CD8-positive, alpha-beta T cell (primary cell): ENCODE measurements at regions of chr7 and their contacts with region 1.

Region 1: GRCh38 chr7:78039790-78040776 is 241.5 kb downstream of the PHTF2 start:
- DNase-seq: peak; percentile 4 to 72 (median 28)
- ATAC-seq: peak; percentile 58
- H3K4me3 ChIP-seq: no peak overlapping the region
- H3K4me3 Mint-ChIP-seq: no peak overlapping the region
- H3K27ac ChIP-seq: no peak overlapping the region
- H3K27ac Mint-ChIP-seq: no peak overlapping the region
- H3K4me1 ChIP-seq: peaks cover 3% of the 10 kb centered on the region
- H3K4me1 Mint-ChIP-seq: peaks cover 2% of the 10 kb centered on the region
- H3K27me3 ChIP-seq: no peaks in the 10 kb centered on the region
- H3K27me3 Mint-ChIP-seq: peaks cover 27% of the 10 kb centered on the region
- CTCF ChIP-seq: peak; percentile 79

Region 2: DNA sequence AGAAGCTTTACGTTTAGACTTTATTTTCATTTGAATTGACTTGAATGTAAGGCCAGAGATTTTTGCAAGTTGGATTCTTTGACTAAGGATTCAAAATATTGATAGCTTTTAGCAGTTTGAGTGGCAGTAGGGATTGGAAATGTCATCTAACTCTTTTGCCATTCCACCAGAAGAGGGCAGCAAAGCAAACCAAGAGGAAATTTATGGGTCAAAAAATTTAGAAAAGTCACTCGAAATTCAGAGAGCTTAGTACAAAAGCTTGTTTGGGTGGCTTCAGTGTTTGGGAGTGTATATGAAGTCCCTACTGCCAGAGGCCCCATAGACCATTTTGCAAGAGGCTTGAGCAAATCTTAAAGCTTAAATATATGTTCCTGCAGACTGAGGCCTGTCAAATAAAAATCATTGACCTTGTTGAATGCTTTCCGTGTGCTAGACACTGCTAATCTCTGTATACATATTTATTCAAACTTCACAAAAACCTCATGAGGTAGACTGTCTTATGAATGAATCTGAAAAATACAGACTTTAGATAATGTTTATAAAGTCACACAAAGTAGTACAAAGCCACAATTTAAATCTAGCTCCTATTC is 388.4 kb before region 1 on chr7:
- CTCF ChIA-PET with region 1: interaction called, 10 read pairs
- POLR2A ChIA-PET with region 1: no interaction called
- intact Hi-C with region 1: loop called (anchors 2 kb)
- DNase-seq: peak in 5 of 9 experiments; percentile 13 to 62 (median 37)
- ATAC-seq: peak; percentile 44
- H3K4me3 ChIP-seq: no peak overlapping the region
- H3K4me3 Mint-ChIP-seq: no peak overlapping the region
- H3K27ac ChIP-seq: no peak overlapping the region
- H3K27ac Mint-ChIP-seq: no peak overlapping the region
- H3K4me1 ChIP-seq: no peaks in the 10 kb centered on the region
- H3K4me1 Mint-ChIP-seq: no peaks in the 10 kb centered on the region
- H3K27me3 ChIP-seq: no peaks in the 10 kb centered on the region
- H3K27me3 Mint-ChIP-seq: no peaks in the 10 kb centered on the region
- CTCF ChIP-seq: peak; percentile 78

Region 3: DNA sequence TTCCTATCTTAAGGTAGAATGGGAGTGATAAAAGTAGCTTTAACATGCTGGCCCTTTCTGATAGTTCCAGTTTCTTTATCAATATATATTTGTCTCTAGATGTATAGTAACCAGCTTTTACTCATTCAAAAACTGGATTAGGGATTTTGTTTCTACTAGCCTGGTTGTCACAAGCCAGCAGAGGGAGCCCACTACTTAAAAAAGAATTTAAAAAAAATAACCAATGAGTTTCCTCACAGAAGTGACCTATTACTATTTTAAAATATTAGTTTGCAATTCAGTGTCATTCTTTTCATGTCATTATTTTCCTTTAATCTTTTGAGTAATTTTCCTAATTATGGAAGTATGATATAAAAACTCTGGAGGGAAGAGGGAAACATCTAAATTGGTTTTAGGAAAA is 99.4 kb before region 1 on chr7:
- CTCF ChIA-PET with region 1: no interaction called
- POLR2A ChIA-PET with region 1: no interaction called
- intact Hi-C with region 1: loop called (anchors 2 kb)
- DNase-seq: peak in 2 of 9 experiments; percentile 6 to 8
- ATAC-seq: no peak
- H3K4me3 ChIP-seq: no peak overlapping the region
- H3K4me3 Mint-ChIP-seq: no peak overlapping the region
- H3K27ac ChIP-seq: no peak overlapping the region
- H3K27ac Mint-ChIP-seq: no peak overlapping the region
- H3K4me1 ChIP-seq: no peaks in the 10 kb centered on the region
- H3K4me1 Mint-ChIP-seq: peaks cover 2% of the 10 kb centered on the region
- H3K27me3 ChIP-seq: no peaks in the 10 kb centered on the region
- H3K27me3 Mint-ChIP-seq: no peaks in the 10 kb centered on the region
- CTCF ChIP-seq: no peak

Region 4: DNA sequence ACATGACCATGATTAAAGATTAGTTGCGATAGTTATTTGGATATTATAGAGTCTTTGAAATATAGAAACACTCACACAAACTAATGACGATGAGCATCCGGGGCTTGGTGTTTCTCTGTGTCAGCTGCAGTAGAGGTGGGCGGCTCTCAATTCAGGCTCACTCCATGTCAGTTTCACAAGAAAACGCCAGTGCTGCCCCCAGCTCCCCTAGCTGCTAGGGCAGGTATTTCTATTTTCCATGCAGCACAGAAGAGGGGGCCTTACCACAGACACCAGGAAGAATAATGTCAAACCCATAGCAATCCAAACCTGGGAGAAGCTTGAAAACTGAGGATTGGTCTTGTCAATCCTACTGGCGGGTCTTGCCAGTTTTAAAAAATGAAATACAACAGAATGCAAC is 44.4 kb before region 1 on chr7:
- CTCF ChIA-PET with region 1: no interaction called
- POLR2A ChIA-PET with region 1: no interaction called
- intact Hi-C with region 1: no loop called
- DNase-seq: no peak
- ATAC-seq: no peak
- H3K4me3 ChIP-seq: no peak overlapping the region
- H3K4me3 Mint-ChIP-seq: no peak overlapping the region
- H3K27ac ChIP-seq: no peak overlapping the region
- H3K27ac Mint-ChIP-seq: no peak overlapping the region
- H3K4me1 ChIP-seq: no peaks in the 10 kb centered on the region
- H3K4me1 Mint-ChIP-seq: no peaks in the 10 kb centered on the region
- H3K27me3 ChIP-seq: no peaks in the 10 kb centered on the region
- H3K27me3 Mint-ChIP-seq: peaks cover 9% of the 10 kb centered on the region
- CTCF ChIP-seq: no peak

Region 5: GRCh38 chr7:78020136-78020873 is 19.8 kb before region 1 on chr7:
- CTCF ChIA-PET with region 1: interaction called, 77 read pairs
- POLR2A ChIA-PET with region 1: interaction called, 5 read pairs
- intact Hi-C with region 1: loop called (anchors 1 to 2 kb)
- DNase-seq: peak in 6 of 9 experiments; percentile 18 to 67 (median 42)
- ATAC-seq: peak; percentile 48
- H3K4me3 ChIP-seq: peak overlapping the region; percentile 41 to 64
- H3K4me3 Mint-ChIP-seq: peak overlapping the region; percentile 80
- H3K27ac ChIP-seq: peak overlapping the region in 1 of 2 experiments; percentile 49
- H3K27ac Mint-ChIP-seq: peak overlapping the region; percentile 47
- H3K4me1 ChIP-seq: peaks cover 5% of the 10 kb centered on the region
- H3K4me1 Mint-ChIP-seq: peaks cover 8% of the 10 kb centered on the region
- H3K27me3 ChIP-seq: no peaks in the 10 kb centered on the region
- H3K27me3 Mint-ChIP-seq: peaks cover 26% of the 10 kb centered on the region
- CTCF ChIP-seq: peak; percentile 61

Region 6: GRCh38 chr7:78099715-78100394 is 59.8 kb after region 1 on chr7:
- CTCF ChIA-PET with region 1: no interaction called
- POLR2A ChIA-PET with region 1: no interaction called
- intact Hi-C with region 1: loop called in 1 of 2 experiments (anchors 10 kb)
- DNase-seq: no peak
- ATAC-seq: no peak
- H3K4me3 ChIP-seq: no peak overlapping the region
- H3K4me3 Mint-ChIP-seq: no peak overlapping the region
- H3K27ac ChIP-seq: no peak overlapping the region
- H3K27ac Mint-ChIP-seq: no peak overlapping the region
- H3K4me1 ChIP-seq: no peaks in the 10 kb centered on the region
- H3K4me1 Mint-ChIP-seq: no peaks in the 10 kb centered on the region
- H3K27me3 ChIP-seq: no peaks in the 10 kb centered on the region
- H3K27me3 Mint-ChIP-seq: peaks cover 19% of the 10 kb centered on the region
- CTCF ChIP-seq: no peak